ENCODE measurements at regions of chr10 and their contacts with region 1.

Region 1: DNA sequence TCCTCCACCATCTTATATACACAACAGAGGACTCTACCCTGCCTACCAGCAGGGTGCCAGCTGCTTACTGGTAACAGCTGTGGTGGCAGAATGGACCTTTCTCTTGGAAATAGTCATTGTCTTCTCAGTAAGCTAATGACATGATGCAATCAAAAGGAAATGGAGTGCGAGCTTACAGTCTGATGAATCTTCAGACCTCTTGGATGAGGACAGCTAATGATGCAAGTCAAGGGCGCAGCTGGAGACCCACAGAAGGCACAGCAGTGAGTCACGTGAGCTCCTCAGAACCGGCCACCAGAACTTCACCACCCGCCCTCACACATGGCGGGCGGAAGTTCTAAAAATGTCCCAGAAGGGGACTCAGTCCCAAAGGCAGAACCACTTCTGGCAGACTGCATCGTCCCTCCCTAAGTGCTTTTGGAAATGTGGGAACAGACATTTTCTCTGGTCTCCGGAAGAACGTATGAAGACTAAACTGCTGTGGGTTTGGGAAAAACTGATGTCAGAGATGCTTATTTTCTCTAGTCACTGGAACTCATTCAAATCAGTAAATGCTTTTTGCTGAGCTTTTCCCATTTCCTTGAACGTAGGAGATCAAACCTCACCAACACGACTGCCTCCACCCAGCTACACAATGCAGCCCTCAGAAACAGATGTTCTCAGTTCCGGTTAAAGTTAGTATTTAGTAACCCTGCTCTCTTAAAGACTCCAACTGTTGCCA is 96.4 kb downstream of the FAS start:
- DNase-seq: peak; percentile 82
- ATAC-seq: no peak
- H3K4me3 ChIP-seq: no peak overlapping the region
- H3K27ac ChIP-seq: no peak overlapping the region
- H3K4me1 ChIP-seq: peaks cover 11% of the 10 kb centered on the region
- H3K27me3 ChIP-seq: no peaks in the 10 kb centered on the region
- CTCF ChIP-seq: no peak
- POLR2A ChIP-seq: no peak
- RAD21 ChIP-seq: no peak

Region 2: DNA sequence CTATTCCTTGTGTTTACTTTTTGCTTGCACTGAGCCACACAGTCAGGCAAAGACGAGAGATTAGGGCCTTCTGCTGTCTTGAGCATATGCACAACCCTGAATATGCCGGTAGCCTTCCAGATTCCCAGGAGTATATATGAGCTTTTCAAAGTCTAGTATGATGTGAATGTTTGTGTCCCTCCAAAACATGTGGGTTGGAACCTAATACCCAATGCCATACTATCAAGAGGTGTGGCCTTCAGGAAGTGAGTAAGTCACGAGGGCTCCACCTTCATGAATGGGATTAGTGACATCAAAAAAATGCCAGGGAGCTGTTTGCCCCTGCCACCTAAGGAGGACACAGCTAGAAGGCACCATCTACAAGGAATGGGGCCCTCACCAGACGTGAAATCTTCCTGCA is 15.0 kb after region 1 on chr10:
- CTCF ChIA-PET with region 1: no interaction called
- POLR2A ChIA-PET with region 1: no interaction called
- dilution Hi-C with region 1: no loop called
- in situ Hi-C with region 1: no loop called
- intact Hi-C with region 1: loop called (anchors 1 kb)
- DNase-seq: no peak
- ATAC-seq: no peak
- H3K4me3 ChIP-seq: no peak overlapping the region
- H3K27ac ChIP-seq: no peak overlapping the region
- H3K4me1 ChIP-seq: peaks cover 10% of the 10 kb centered on the region
- H3K27me3 ChIP-seq: no peaks in the 10 kb centered on the region
- CTCF ChIP-seq: no peak
- POLR2A ChIP-seq: no peak
- RAD21 ChIP-seq: no peak

Region 3: DNA sequence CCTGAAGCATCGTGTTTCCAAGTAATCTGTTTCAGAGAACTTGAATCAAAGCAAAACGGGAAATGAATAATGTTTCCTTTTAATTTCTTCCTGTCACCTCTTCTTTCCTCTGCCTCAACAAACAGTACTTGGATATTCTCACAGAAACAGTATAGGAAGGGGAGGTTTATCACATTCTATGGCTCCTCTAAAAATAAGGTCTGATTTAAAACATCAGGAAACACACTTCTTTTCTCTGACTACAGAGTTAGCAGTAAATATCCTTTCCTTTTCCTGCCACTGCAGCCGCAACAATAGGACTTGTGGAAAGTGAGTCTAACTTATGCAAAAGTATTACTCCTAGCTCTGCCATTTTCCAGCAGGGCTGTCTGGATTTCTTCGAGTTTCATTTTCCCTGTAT is 57.9 kb after region 1 on chr10:
- CTCF ChIA-PET with region 1: no interaction called
- POLR2A ChIA-PET with region 1: interaction called, 15 read pairs
- dilution Hi-C with region 1: no loop called
- in situ Hi-C with region 1: no loop called
- intact Hi-C with region 1: no loop called
- DNase-seq: no peak
- ATAC-seq: no peak
- H3K4me3 ChIP-seq: no peak overlapping the region
- H3K27ac ChIP-seq: no peak overlapping the region
- H3K4me1 ChIP-seq: no peaks in the 10 kb centered on the region; the same call in 1 of the 2 replicates
- H3K27me3 ChIP-seq: no peaks in the 10 kb centered on the region; the same call in 1 of the 2 replicates
- CTCF ChIP-seq: no peak
- POLR2A ChIP-seq: no peak
- RAD21 ChIP-seq: no peak

Measured in IMR-90 (cell line).